Activated CD8-positive, alpha-beta T cell treated with anti-CD3 and anti-CD28 coated beads for 36 hours (primary cell): ENCODE measurements at regions of chr17 and their contacts with region 1.

Region 1: GRCh38 chr17:36755586-36755985 is 154.2 kb downstream of the MRM1 start:
- DNase-seq: peak; percentile 67
- ATAC-seq: peak; percentile 65
- H3K4me3 Mint-ChIP-seq: no peak overlapping the region
- H3K27ac Mint-ChIP-seq: no peak overlapping the region
- H3K4me1 Mint-ChIP-seq: no peaks in the 10 kb centered on the region
- H3K27me3 Mint-ChIP-seq: peaks cover 2% of the 10 kb centered on the region
- CTCF ChIP-seq: peak; percentile 65

Region 2: GRCh38 chr17:36629252-36629847 is 126.2 kb before region 1 on chr17:
- CTCF ChIA-PET with region 1: interaction called, 10 read pairs
- POLR2A ChIA-PET with region 1: no interaction called
- intact Hi-C with region 1: loop called (anchors 10 kb)
- DNase-seq: peak; percentile 85
- ATAC-seq: peak; percentile 96
- H3K4me3 Mint-ChIP-seq: no peak overlapping the region
- H3K27ac Mint-ChIP-seq: no peak overlapping the region
- H3K4me1 Mint-ChIP-seq: no peaks in the 10 kb centered on the region
- H3K27me3 Mint-ChIP-seq: peaks cover 5% of the 10 kb centered on the region
- CTCF ChIP-seq: peak; percentile 95